ENCODE measurements at regions of chr13 and their contacts with region 1.

Region 1: DNA sequence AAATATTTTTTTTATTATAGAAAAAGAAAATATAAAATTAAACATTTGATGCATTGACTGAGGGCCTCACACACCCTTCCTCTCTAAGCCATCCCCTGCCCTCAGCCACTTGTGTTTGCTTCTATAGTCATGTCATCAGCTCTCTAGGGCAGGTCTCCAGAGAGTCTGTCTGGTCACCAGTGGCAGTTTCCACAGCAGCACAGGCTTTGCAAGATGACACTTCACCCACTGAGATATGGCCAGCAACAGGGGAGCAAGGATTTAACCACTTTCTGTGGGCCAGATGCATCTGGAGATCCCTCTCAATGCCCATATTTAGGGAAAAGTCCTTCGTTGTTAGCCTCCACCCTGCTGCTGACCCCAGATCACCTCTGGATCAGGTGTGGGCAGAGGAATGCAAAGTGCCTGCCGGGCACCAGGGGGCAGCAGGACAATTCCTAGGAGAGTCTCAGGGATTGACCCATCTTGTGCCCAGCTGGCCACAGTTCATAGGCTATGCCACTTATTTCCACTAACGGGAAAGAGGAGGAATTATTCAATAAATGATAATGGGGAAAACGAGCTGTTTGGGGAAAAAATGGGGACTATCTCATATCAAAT is 4.8 kb downstream of the ABCC4 start:
- DNase-seq: peak; percentile 49 to 75 (median 67)
- H3K4me3 ChIP-seq: no peak overlapping the region
- H3K27ac ChIP-seq: no peak overlapping the region
- H3K4me1 ChIP-seq: no peaks in the 10 kb centered on the region
- H3K27me3 ChIP-seq: no peaks in the 10 kb centered on the region
- CTCF ChIP-seq: peak; percentile 45 to 75 (median 68)
- POLR2A ChIP-seq: no peak

Region 2: GRCh38 chr13:95382411-95382810 is 86.0 kb after region 1 on chr13:
- intact Hi-C with region 1: loop called in 1 of 2 experiments (anchors 5 kb)
- DNase-seq: no peak
- H3K4me3 ChIP-seq: no peak overlapping the region
- H3K27ac ChIP-seq: no peak overlapping the region
- H3K4me1 ChIP-seq: no peaks in the 10 kb centered on the region
- H3K27me3 ChIP-seq: no peaks in the 10 kb centered on the region
- CTCF ChIP-seq: no peak
- POLR2A ChIP-seq: no peak

Region 3: DNA sequence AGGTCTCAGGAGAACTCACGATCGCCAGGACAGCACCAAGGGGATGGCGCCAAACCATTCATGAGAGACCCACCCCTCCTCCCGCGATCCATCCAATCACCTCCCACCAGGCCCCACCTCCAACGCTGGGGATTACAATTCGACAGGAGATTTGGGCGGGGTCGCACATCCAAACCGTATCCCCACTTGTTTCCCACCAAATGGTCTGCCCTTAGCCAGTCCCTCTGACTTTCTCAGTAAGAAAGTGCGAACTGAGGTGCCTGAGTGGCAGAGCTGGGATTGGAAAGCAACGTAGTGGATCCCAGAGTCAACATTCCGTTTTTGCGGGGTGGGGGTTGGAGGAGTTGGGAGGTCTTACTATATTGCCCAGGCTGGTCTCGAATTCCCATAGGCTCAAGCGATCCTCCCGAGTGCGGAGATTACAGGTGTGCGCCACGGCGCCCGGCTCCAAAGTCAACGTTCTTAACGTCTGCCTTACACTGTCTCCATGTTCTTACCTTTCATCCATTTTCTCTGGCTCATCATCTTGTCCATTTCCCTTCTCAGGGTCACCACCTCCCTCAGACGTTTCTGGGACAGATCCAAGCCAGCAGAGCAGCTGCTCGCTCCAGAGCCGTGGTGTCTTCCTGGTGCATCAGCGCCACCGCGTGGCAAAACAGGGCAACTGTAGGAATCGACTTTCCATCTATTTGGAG is 107.5 kb after region 1 on chr13:
- intact Hi-C with region 1: loop called in 1 of 2 experiments (anchors 2 kb)
- DNase-seq: peak; percentile 87 to 95 (median 89)
- H3K4me3 ChIP-seq: peak overlapping the region in 1 of 4 donors; percentile 16
- H3K27ac ChIP-seq: no peak overlapping the region
- H3K4me1 ChIP-seq: peaks cover 3 to 8% of the 10 kb centered on the region in 2 donors
- H3K27me3 ChIP-seq: no peaks in the 10 kb centered on the region
- CTCF ChIP-seq: peak; percentile 89 to 98 (median 95)
- POLR2A ChIP-seq: no peak

Region 4: DNA sequence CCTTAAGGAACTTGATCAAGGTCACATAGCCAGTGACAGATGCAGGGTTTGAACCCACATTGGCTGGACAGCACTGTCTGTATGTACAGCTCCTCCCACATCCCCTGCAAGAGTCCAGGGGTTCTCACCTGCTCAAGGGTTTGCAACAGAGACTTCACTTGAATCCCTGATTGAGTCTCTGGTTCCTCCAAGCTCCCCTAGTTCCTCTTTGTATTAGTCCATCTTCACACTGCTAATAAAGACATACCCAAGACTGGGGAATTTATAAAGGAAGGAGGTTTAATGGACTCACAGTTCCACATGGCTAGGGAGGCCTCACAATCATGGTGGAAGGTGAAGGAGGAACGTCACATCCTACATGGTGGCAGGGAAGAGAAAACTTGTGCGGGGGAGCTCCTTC is 183.3 kb after region 1 on chr13:
- intact Hi-C with region 1: loop called in 1 of 2 experiments (anchors 10 kb)
- DNase-seq: no peak
- H3K4me3 ChIP-seq: no peak overlapping the region
- H3K27ac ChIP-seq: peak overlapping the region in 2 of 5 donors; percentile 47 to 58
- H3K4me1 ChIP-seq: peaks cover 10 to 13% of the 10 kb centered on the region in 2 donors
- H3K27me3 ChIP-seq: no peaks in the 10 kb centered on the region
- CTCF ChIP-seq: no peak
- POLR2A ChIP-seq: no peak

Region 5: DNA sequence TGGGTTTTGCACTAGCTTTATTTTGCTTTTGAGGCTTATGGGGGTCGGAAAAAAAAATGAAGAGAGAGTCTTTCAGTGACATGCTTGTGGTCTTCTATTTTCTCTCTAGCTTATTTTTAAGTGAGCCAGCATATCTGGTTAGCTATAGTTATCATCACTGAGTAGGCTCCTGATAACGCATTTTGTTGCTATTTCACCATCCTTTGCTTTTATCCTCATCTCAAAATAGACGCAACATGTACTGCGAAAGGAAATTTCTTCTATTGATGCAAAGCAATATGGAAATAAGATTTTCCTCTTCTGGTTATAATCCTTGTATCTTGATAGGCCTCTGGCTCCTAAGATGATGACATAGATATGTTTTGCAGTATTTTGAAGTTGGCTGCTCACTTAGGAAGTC is 1424.0 kb after region 1 on chr13:
- intact Hi-C with region 1: no loop called
- DNase-seq: no peak
- H3K4me3 ChIP-seq: no peak overlapping the region
- H3K27ac ChIP-seq: no peak overlapping the region
- H3K4me1 ChIP-seq: no peaks in the 10 kb centered on the region
- H3K27me3 ChIP-seq: no peaks in the 10 kb centered on the region
- CTCF ChIP-seq: no peak
- POLR2A ChIP-seq: no peak